ENCODE measurements at regions of chr13 and their contacts with region 1.

Region 1: GRCh38 chr13:61410669-61411297 is 4.9 kb downstream of the PCDH20 start:
- DNase-seq: no peak
- ATAC-seq: no peak
- H3K4me3 ChIP-seq: no peak overlapping the region
- H3K4me3 Mint-ChIP-seq: no peak overlapping the region
- H3K27ac ChIP-seq: no peak overlapping the region
- H3K27ac Mint-ChIP-seq: no peak overlapping the region
- H3K4me1 ChIP-seq: no peaks in the 10 kb centered on the region
- H3K4me1 Mint-ChIP-seq: no peaks in the 10 kb centered on the region
- H3K27me3 ChIP-seq: peaks cover 0 to 4% of the 10 kb centered on the region in 2 donors
- H3K27me3 Mint-ChIP-seq: peaks cover 19 to 29% (median 28%) of the 10 kb centered on the region in 5 donors

Region 2: GRCh38 chr13:60627071-60627686 is 783.6 kb before region 1 on chr13:
- CTCF ChIA-PET with region 1: no interaction called
- POLR2A ChIA-PET with region 1: no interaction called
- intact Hi-C with region 1: loop called in 1 of 2 experiments (anchors 10 kb)
- DNase-seq: no peak
- ATAC-seq: no peak
- H3K4me3 ChIP-seq: no peak overlapping the region
- H3K4me3 Mint-ChIP-seq: no peak overlapping the region
- H3K27ac ChIP-seq: no peak overlapping the region
- H3K27ac Mint-ChIP-seq: no peak overlapping the region
- H3K4me1 ChIP-seq: no peaks in the 10 kb centered on the region
- H3K4me1 Mint-ChIP-seq: no peaks in the 10 kb centered on the region
- H3K27me3 ChIP-seq: no peaks in the 10 kb centered on the region
- H3K27me3 Mint-ChIP-seq: peaks cover 0 to 31% (median 11%) of the 10 kb centered on the region in 5 donors

Region 3: DNA sequence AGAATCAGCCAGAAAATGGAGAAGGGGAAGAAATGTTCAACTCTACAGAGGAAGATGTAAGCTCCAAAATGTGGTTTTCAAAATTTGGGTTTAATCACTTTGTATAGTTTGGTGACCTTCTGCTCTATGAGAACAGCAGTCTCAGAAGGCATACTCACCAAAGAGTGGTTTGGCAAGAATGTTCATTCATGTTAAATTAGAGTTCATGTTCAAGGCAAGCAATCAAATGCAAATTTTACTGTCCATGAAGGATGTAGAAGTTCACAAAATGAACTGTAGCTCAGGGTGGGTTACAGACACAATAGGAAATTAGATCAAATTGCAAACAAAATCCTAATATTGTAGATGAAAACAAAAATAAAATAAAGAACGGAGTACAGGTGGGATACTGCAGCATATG is 611.6 kb after region 1 on chr13:
- CTCF ChIA-PET with region 1: no interaction called
- POLR2A ChIA-PET with region 1: no interaction called
- intact Hi-C with region 1: no loop called
- DNase-seq: no peak
- ATAC-seq: no peak
- H3K4me3 ChIP-seq: no peak overlapping the region
- H3K4me3 Mint-ChIP-seq: no peak overlapping the region
- H3K27ac ChIP-seq: no peak overlapping the region
- H3K27ac Mint-ChIP-seq: no peak overlapping the region
- H3K4me1 ChIP-seq: no peaks in the 10 kb centered on the region
- H3K4me1 Mint-ChIP-seq: no peaks in the 10 kb centered on the region
- H3K27me3 ChIP-seq: no peaks in the 10 kb centered on the region
- H3K27me3 Mint-ChIP-seq: no peaks in the 10 kb centered on the region